Colonic mucosa (tissue), 4 donors: ENCODE measurements at regions of chr15 and their contacts with region 1.

Region 1: GRCh38 chr15:81155375-81156218 is 21.5 kb downstream of the CFAP161 start:
- DNase-seq: no peak
- H3K4me3 ChIP-seq: no peak overlapping the region
- H3K27ac ChIP-seq: no peak overlapping the region
- H3K4me1 ChIP-seq: no peaks in the 10 kb centered on the region
- H3K27me3 ChIP-seq: no peaks in the 10 kb centered on the region
- CTCF ChIP-seq: peak; percentile 30

Region 2: DNA sequence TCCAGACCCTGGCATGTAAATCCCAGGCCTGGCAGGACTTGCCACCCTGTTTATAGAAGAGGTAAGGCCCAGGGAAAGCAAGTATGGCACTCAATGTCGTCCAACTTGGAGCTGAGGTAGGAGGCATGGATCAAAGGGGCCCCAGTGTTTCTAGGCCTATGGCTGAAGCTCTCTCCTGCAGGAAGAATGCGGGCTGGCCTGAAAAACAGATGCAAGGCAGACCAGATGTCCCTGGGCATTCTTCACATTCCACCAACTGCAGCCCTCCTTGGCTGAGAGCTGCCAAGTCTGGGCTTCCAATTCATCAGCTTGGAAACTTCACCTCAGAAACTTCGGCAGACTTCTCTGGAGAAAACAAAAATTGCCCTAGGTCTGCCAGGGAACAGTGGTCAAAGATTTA is 188.1 kb before region 1 on chr15:
- intact Hi-C with region 1: no loop called
- DNase-seq: no peak
- H3K4me3 ChIP-seq: no peak overlapping the region
- H3K27ac ChIP-seq: no peak overlapping the region
- H3K4me1 ChIP-seq: no peaks in the 10 kb centered on the region
- H3K27me3 ChIP-seq: no peaks in the 10 kb centered on the region
- CTCF ChIP-seq: no peak

Region 3: DNA sequence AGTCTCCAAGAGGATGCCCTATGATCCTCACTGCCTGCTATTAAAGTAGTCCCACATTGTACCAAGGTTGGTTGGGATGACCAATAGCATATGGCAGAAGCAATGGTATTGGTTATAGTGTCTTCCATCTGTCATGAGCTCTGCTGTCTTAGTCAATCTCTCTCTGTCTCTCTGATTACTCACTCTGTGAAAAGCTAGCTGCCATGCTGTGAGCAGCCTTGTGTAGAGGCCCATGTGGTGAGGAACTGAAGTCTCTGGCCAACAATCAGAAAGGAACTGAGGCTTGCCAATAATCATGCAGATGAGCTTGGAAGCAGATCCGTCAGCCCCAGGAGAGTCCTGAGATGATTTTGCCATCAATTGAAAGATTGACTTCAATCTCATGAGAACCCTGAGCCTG is 81.8 kb before region 1 on chr15:
- intact Hi-C with region 1: no loop called
- DNase-seq: no peak
- H3K4me3 ChIP-seq: no peak overlapping the region
- H3K27ac ChIP-seq: no peak overlapping the region
- H3K4me1 ChIP-seq: no peaks in the 10 kb centered on the region
- H3K27me3 ChIP-seq: no peaks in the 10 kb centered on the region
- CTCF ChIP-seq: no peak

Region 4: GRCh38 chr15:81106560-81106959 is 49.0 kb before region 1 on chr15:
- intact Hi-C with region 1: loop called (anchors 5 kb)
- DNase-seq: peak; percentile 45
- H3K4me3 ChIP-seq: no peak overlapping the region
- H3K27ac ChIP-seq: no peak overlapping the region
- H3K4me1 ChIP-seq: no peaks in the 10 kb centered on the region
- H3K27me3 ChIP-seq: no peaks in the 10 kb centered on the region
- CTCF ChIP-seq: peak; percentile 70